Ovary (tissue), 10 donors: ENCODE measurements at regions of chr3 and their contacts with region 1.

Region 1: GRCh38 chr3:20573175-20573574 is 387.2 kb upstream of the SGO1 start:
- DNase-seq: no peak
- H3K4me3 ChIP-seq: no peak overlapping the region
- H3K27ac ChIP-seq: no peak overlapping the region
- H3K4me1 ChIP-seq: peaks cover 4% of the 10 kb centered on the region
- H3K27me3 ChIP-seq: no peaks in the 10 kb centered on the region
- CTCF ChIP-seq: no peak
- EP300 ChIP-seq: no peak
- POLR2A ChIP-seq: no peak

Region 2: GRCh38 chr3:20401253-20401652 is 171.9 kb before region 1 on chr3:
- intact Hi-C with region 1: loop called in 1 of 4 experiments (anchors 2 kb)
- DNase-seq: no peak
- H3K4me3 ChIP-seq: no peak overlapping the region
- H3K27ac ChIP-seq: no peak overlapping the region
- H3K4me1 ChIP-seq: peaks cover 4% of the 10 kb centered on the region
- H3K27me3 ChIP-seq: no peaks in the 10 kb centered on the region
- CTCF ChIP-seq: no peak
- EP300 ChIP-seq: no peak
- POLR2A ChIP-seq: no peak

Region 3: GRCh38 chr3:20561166-20561565 is 12.0 kb before region 1 on chr3:
- intact Hi-C with region 1: no loop called
- DNase-seq: no peak
- H3K4me3 ChIP-seq: no peak overlapping the region
- H3K27ac ChIP-seq: no peak overlapping the region
- H3K4me1 ChIP-seq: no peaks in the 10 kb centered on the region
- H3K27me3 ChIP-seq: no peaks in the 10 kb centered on the region
- CTCF ChIP-seq: no peak
- EP300 ChIP-seq: no peak
- POLR2A ChIP-seq: no peak